ENCODE measurements at regions of chr17 and their contacts with region 1.

Region 1: DNA sequence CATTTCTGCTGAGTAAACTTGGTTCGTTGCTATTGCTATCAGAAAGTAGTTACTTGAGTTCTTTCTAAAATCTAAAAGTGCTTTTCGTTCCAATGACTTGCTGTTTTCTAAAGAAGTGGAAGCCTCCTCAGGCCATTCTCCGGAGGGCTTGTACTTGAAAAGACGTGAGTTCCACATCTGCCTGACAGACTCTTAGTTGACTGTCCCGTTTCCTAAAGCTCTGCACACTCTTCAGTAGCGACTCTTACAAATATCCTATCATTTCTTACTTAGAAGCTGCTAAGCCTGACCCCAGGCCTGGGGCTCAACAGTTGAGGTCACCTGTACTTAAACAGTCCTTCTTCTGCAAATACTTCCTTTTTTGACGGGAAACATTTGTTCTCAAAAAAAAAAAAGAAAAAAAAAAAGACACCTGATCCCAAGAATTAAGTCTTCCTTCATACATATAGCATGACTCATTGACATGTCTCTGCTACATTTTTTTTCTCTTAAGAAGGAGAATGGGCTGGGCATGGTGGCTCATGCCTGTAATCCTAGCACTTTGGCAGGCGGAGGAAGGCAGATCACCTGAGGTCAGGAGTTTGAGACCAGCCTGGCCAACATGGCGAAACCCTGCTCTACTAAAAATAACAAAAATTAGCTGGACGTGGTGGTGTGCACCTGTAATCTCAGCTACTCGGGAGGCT is 61.5 kb downstream of the DHRS7C start:
- DNase-seq: no peak
- ATAC-seq: no peak
- H3K4me3 ChIP-seq: no peak overlapping the region
- H3K27ac ChIP-seq: no peak overlapping the region
- H3K4me1 ChIP-seq: no peaks in the 10 kb centered on the region
- H3K27me3 ChIP-seq: no peaks in the 10 kb centered on the region
- CTCF ChIP-seq: no peak

Region 2: GRCh38 chr17:9676742-9677387 is 53.0 kb before region 1 on chr17:
- intact Hi-C with region 1: no loop called
- DNase-seq: no peak
- ATAC-seq: no peak
- H3K4me3 ChIP-seq: no peak overlapping the region
- H3K27ac ChIP-seq: no peak overlapping the region
- H3K4me1 ChIP-seq: no peaks in the 10 kb centered on the region
- H3K27me3 ChIP-seq: no peaks in the 10 kb centered on the region
- CTCF ChIP-seq: no peak

Region 3: GRCh38 chr17:9696266-9697027 is 33.4 kb before region 1 on chr17:
- intact Hi-C with region 1: no loop called
- DNase-seq: no peak
- ATAC-seq: no peak
- H3K4me3 ChIP-seq: no peak overlapping the region
- H3K27ac ChIP-seq: no peak overlapping the region
- H3K4me1 ChIP-seq: no peaks in the 10 kb centered on the region
- H3K27me3 ChIP-seq: no peaks in the 10 kb centered on the region
- CTCF ChIP-seq: no peak

Region 4: GRCh38 chr17:9768381-9768934 is 38.6 kb after region 1 on chr17:
- intact Hi-C with region 1: loop called in 1 of 2 experiments (anchors 5 kb)
- DNase-seq: no peak
- ATAC-seq: peak in 3 of 4 donors; percentile 47 to 65 (median 55)
- H3K4me3 ChIP-seq: no peak overlapping the region
- H3K27ac ChIP-seq: no peak overlapping the region
- H3K4me1 ChIP-seq: no peaks in the 10 kb centered on the region
- H3K27me3 ChIP-seq: peaks cover 0 to 17% (median 2%) of the 10 kb centered on the region in 3 donors
- CTCF ChIP-seq: peak; percentile 70

Region 5: DNA sequence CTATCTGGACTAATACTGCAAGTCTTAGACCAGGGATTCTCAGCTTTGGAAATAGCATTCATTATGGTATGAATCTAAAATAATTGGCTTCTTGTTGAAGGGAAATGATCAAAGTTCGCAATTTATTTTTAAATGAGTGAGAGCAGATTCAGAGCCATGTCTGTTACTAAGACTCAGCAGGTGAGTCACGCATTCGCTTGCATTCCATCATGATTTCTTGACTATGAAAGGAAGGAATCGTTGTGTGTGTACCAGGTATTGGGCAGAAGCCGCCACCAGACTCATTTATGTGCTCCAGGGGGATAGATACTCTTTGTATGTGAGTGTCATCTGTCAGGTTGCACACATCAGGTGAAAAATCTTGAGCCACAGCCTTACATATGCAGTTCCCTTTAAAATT is 81.2 kb after region 1 on chr17:
- intact Hi-C with region 1: no loop called
- DNase-seq: no peak
- ATAC-seq: no peak
- H3K4me3 ChIP-seq: no peak overlapping the region
- H3K27ac ChIP-seq: no peak overlapping the region
- H3K4me1 ChIP-seq: peaks cover 3% of the 10 kb centered on the region
- H3K27me3 ChIP-seq: no peaks in the 10 kb centered on the region
- CTCF ChIP-seq: no peak

Region 6: GRCh38 chr17:9865586-9865985 is 135.7 kb after region 1 on chr17:
- intact Hi-C with region 1: loop called in 1 of 2 experiments (anchors 10 kb)
- DNase-seq: no peak
- ATAC-seq: no peak
- H3K4me3 ChIP-seq: no peak overlapping the region
- H3K27ac ChIP-seq: no peak overlapping the region
- H3K4me1 ChIP-seq: no peaks in the 10 kb centered on the region
- H3K27me3 ChIP-seq: no peaks in the 10 kb centered on the region
- CTCF ChIP-seq: no peak